ENCODE measurements at regions of chr3 and their contacts with region 1.

Region 1: DNA sequence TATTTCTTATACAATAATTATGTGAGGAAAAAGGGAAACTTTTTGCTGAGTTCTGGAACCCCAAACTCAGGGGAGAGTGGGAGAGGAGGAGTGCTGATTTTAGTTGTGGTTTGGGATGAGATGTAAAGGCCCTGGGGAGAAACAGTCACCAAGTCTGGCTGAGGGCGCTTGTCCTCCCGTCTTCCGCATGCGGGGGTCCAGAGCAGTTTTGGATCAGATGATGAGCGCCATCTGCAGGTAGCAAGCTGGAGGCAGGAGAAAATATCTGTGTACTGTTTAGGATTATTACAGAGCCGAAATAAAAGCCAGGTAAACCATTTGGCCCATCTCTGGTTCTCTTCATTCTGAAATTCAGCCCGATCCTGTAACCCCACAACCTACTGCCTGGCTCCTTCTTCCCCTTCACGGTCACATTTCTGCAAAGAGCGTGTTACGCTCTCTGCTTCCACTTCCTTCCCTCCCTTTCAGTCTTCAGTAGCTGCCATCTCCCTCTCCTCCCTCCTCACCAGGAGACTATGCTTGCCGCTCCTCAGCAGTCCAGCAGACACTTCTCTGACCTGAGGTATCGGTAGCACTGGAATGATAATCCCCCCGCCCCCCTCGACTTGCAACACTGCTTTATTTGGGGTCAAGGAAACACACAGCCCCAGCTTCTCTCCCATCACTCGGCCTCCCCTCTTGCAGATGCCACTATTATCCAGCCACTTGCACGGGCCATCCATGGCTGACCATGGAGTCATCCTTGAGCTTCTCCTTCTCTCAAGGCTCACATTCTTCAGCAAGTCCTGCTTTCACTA is 1.4 kb upstream of the PARP14 start:
- DNase-seq: peak; percentile 93
- H3K4me3 ChIP-seq: peak overlapping the region in 3 of 4 donors; percentile 69 to 89 (median 80)
- H3K27ac ChIP-seq: peak overlapping the region; percentile 89 to 97 (median 92)
- H3K4me1 ChIP-seq: peaks cover 0 to 34% (median 32%) of the 10 kb centered on the region in 4 donors
- H3K27me3 ChIP-seq: no peaks in the 10 kb centered on the region
- CTCF ChIP-seq: peak; percentile 76 to 86 (median 82)
- EP300 ChIP-seq: no peak
- POLR2A ChIP-seq: no peak

Region 2: DNA sequence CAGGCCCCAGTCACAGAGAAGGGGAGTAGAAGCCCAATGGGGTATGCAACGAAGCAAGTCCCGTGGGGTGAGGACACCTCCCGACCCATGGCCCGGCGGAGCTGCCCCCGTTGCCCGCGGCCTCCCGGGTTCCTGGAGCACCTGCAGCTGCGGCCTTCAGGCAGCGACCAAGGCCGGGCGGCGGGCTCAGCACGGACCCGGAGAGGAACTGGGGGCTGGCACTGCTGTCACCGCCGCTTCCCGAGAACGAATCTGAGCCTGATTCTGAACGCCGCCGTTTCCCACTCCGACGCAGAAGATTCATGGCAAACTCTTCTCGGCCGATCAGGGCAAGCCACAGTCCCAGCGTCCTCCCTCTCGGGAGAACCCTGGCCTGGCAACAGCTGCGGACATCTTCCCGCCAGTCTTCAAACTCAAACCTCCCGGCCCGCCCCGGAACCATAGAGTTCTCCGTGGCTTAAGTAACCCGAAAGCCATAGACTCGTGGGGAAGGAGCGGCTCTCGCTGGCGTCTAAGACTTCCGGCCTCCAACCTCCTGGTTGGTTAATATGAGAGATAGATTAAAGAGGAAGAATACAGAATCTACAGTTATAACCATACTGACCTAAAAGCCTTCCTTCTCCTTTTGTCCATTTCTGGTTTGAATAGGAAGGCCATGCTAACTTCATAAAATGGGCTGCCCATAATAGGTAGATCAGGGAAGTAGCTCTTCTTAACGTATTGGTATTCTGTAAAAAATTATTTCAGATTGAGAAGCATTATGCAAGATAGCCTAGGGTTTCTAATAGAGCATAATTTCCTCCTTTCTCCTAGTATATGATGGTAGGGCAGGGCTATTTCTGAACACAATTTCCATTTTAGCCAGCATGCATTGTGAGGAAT is 1133.5 kb before region 1 on chr3 and contains the start of gene POLQ:
- intact Hi-C with region 1: loop called (anchors 2 kb)
- DNase-seq: peak; percentile 92
- H3K4me3 ChIP-seq: peak within 1 kb of the TSS; percentile 29 to 61 (median 54)
- H3K27ac ChIP-seq: peak within 1 kb of the TSS; percentile 76 to 84 (median 78)
- H3K4me1 ChIP-seq: peaks cover 0 to 11% (median 9%) of the 10 kb centered on the region in 4 donors
- H3K27me3 ChIP-seq: no peaks in the 10 kb centered on the region
- CTCF ChIP-seq: no peak
- EP300 ChIP-seq: peak in 1 of 4 donors; percentile 1
- POLR2A ChIP-seq: no peak
- total RNA-seq, gene POLQ: 0.16 to 0.71 (median 0.48) TPM

Region 3: DNA sequence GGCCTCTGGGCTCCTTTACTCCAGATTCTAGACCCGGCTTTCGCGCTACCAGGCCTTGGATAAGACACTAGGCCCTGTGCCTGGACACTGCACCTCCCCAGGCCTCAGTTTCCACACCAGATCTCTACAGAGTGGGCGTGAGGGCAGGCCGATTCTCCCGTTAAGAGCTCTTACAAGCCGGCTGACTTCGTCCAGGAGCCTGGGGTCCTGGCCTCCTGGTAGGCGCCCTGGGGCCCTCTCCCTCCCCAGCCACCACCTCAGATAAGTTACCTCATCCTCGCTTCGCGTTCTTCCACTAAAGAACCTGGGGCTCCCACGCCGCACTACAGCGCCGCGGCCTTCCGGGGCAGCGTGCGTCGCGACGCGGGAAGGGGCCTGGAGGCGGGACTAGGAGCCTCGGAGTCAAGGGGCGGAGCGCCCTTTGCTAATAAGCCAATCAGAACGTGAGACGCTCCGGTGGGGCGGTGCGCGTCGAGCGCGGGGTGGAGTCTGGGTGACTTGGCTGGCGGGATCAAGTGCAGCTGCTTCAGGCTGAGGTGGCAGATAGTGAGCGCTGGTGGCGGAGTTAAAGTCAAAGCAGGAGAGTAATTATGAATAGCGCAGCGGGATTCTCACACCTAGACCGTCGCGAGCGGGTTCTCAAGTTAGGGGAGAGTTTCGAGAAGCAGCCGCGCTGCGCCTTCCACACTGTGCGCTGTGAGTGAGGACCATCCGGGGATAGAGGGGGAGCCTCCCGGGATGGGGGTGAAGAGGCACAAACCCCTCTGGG is 844.4 kb before region 1 on chr3 and contains the starts of genes EAF2 and IQCB1:
- intact Hi-C with region 1: loop called (anchors 10 kb)
- DNase-seq: peak; percentile 98
- H3K4me3 ChIP-seq: peak within 1 kb of the TSS; percentile 38 to 76 (median 70)
- H3K27ac ChIP-seq: peak within 1 kb of the TSS; percentile 77 to 85 (median 83)
- H3K4me1 ChIP-seq: peaks cover 0 to 25% (median 16%) of the 10 kb centered on the region in 4 donors
- H3K27me3 ChIP-seq: no peaks in the 10 kb centered on the region
- CTCF ChIP-seq: no peak
- EP300 ChIP-seq: no peak
- POLR2A ChIP-seq: peak; percentile 30 to 71
- total RNA-seq, gene EAF2: 3.3 to 7.8 (median 6.5) TPM
- total RNA-seq, gene IQCB1: 18.9 to 21.6 (median 19.8) TPM

Region 4: DNA sequence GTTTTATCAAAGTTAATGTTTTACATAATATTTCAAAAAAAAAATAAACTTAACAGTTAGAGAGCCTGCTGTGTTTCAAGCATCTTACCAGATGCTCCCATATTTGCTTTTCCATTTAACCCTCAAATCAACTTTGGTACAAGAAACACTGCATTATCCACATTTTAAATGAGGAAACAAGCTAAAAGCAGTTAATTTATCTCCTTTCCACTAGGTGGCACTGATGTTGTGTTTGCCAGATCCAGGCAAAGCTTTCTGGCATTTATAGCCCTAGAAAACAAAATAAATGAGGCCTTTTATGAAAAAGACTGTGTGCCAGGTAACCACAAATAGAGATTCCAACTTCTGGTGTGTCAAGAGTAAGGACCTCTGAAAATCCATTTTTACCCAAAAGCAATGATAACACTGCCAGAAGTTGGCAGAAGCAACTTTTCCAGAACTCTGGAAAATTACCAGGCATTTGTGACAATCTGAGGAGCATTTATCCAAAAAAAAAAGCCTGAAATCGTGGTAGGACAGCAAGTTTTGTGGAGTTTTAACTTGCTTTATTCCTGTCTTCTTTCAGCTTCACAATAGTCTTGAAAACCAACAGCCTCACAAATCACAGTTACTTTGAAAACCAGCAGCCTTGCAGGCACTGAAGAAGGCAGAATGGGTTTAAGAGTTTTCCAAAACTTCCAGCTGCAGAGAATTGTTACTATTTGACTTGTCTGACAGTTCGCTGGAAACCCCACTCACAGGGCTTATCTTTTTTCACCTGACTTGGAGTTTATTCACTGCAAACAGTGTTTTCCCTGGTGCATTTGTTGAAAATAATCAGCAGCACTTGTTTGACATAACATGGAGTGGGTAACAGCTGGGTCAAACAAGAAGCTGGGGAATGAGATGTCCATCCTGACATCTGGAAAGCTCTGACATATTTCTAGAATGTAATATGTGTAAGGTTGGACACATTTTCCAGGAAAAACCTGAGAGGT is 286.1 kb before region 1 on chr3:
- intact Hi-C with region 1: loop called (anchors 2 kb)
- DNase-seq: no peak
- H3K4me3 ChIP-seq: no peak overlapping the region
- H3K27ac ChIP-seq: peak overlapping the region in 3 of 4 donors; percentile 1 to 46 (median 8)
- H3K4me1 ChIP-seq: peaks cover 0 to 17% (median 7%) of the 10 kb centered on the region in 4 donors
- H3K27me3 ChIP-seq: no peaks in the 10 kb centered on the region
- CTCF ChIP-seq: peak; percentile 32 to 69 (median 52)
- EP300 ChIP-seq: no peak
- POLR2A ChIP-seq: no peak

Region 5: GRCh38 chr3:122458992-122459391 is 220.3 kb before region 1 on chr3:
- intact Hi-C with region 1: loop called (anchors 1 kb)
- DNase-seq: no peak
- H3K4me3 ChIP-seq: no peak overlapping the region
- H3K27ac ChIP-seq: peak overlapping the region in 1 of 4 donors; percentile 11
- H3K4me1 ChIP-seq: no peaks in the 10 kb centered on the region
- H3K27me3 ChIP-seq: no peaks in the 10 kb centered on the region
- CTCF ChIP-seq: peak in 1 of 4 experiments; percentile 18
- EP300 ChIP-seq: no peak
- POLR2A ChIP-seq: no peak

Region 6: GRCh38 chr3:122484985-122485384 is 194.3 kb before region 1 on chr3:
- intact Hi-C with region 1: no loop called
- DNase-seq: no peak
- H3K4me3 ChIP-seq: no peak overlapping the region
- H3K27ac ChIP-seq: no peak overlapping the region
- H3K4me1 ChIP-seq: peaks cover 0 to 20% (median 13%) of the 10 kb centered on the region in 4 donors
- H3K27me3 ChIP-seq: no peaks in the 10 kb centered on the region
- CTCF ChIP-seq: no peak
- EP300 ChIP-seq: no peak
- POLR2A ChIP-seq: no peak

Region 7: GRCh38 chr3:122514123-122515019 is 164.9 kb before region 1 on chr3 and contains the start of gene KPNA1:
- intact Hi-C with region 1: loop called (anchors 2 kb)
- DNase-seq: peak; percentile 92
- H3K4me3 ChIP-seq: peak within 1 kb of the TSS; percentile 69 to 89 (median 80)
- H3K27ac ChIP-seq: peak within 1 kb of the TSS; percentile 93 to 98 (median 96)
- H3K4me1 ChIP-seq: peaks cover 0 to 37% (median 33%) of the 10 kb centered on the region in 4 donors
- H3K27me3 ChIP-seq: no peaks in the 10 kb centered on the region
- CTCF ChIP-seq: no peak
- EP300 ChIP-seq: no peak
- POLR2A ChIP-seq: peak; percentile 91 to 95
- total RNA-seq, gene KPNA1: 34.9 to 50.1 (median 40.3) TPM

Region 8: GRCh38 chr3:122564155-122564912 is 114.9 kb before region 1 on chr3 and contains the starts of genes DTX3L and PARP9:
- intact Hi-C with region 1: loop called (anchors 1 kb)
- DNase-seq: peak; percentile 93
- H3K4me3 ChIP-seq: peak within 1 kb of the TSS; percentile 69 to 81 (median 74)
- H3K27ac ChIP-seq: peak within 1 kb of the TSS; percentile 90 to 95 (median 92)
- H3K4me1 ChIP-seq: peaks cover 0 to 65% (median 45%) of the 10 kb centered on the region in 4 donors
- H3K27me3 ChIP-seq: no peaks in the 10 kb centered on the region
- CTCF ChIP-seq: no peak
- EP300 ChIP-seq: no peak
- POLR2A ChIP-seq: peak; percentile 52 to 62
- total RNA-seq, gene DTX3L: 18.9 to 32.6 (median 25.0) TPM
- total RNA-seq, gene PARP9: 24.5 to 43.0 (median 35.3) TPM

Region 9: DNA sequence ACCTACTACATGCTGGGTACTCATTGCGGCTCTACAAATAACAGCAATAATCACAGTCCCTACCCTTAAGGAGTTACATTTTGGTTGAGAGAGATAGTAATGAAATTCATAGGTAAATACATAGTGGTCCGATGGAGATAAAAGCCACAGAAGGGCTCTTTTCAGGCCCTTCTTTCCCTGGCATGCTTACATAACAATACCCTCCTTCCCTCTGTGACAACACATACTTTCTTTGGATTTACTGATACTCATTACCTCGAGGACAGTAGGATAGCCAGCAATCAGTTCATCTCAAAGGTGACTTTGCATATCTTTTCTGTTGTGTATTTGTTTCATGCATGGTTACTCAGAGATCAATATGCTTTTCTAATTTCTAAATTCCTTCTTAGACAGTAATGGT is 59.9 kb after region 1 on chr3:
- intact Hi-C with region 1: no loop called
- DNase-seq: no peak
- H3K4me3 ChIP-seq: no peak overlapping the region
- H3K27ac ChIP-seq: no peak overlapping the region
- H3K4me1 ChIP-seq: no peaks in the 10 kb centered on the region
- H3K27me3 ChIP-seq: no peaks in the 10 kb centered on the region
- CTCF ChIP-seq: no peak
- EP300 ChIP-seq: no peak
- POLR2A ChIP-seq: no peak

Measured in sigmoid colon (tissue), 7 donors.